ENCODE measurements at regions of chr17 and their contacts with region 1.

Region 1: GRCh38 chr17:13594762-13595598 is 6.7 kb downstream of the HS3ST3A1 start:
- DNase-seq: peak; percentile 51 to 60
- ATAC-seq: peak in 1 of 2 donors; percentile 90
- H3K4me3 ChIP-seq: no peak overlapping the region
- H3K27ac ChIP-seq: no peak overlapping the region
- H3K4me1 ChIP-seq: peaks cover 0 to 8% of the 10 kb centered on the region in 2 donors
- H3K27me3 ChIP-seq: peaks cover 0 to 13% (median 11%) of the 10 kb centered on the region in 3 donors
- CTCF ChIP-seq: peak; percentile 62 to 91 (median 73)
- POLR2A ChIP-seq: no peak

Region 2: GRCh38 chr17:13879961-13880466 is 285.0 kb after region 1 on chr17:
- in situ Hi-C with region 1: no loop called
- intact Hi-C with region 1: no loop called
- DNase-seq: no peak
- ATAC-seq: no peak
- H3K4me3 ChIP-seq: no peak overlapping the region
- H3K27ac ChIP-seq: no peak overlapping the region
- H3K4me1 ChIP-seq: no peaks in the 10 kb centered on the region
- H3K27me3 ChIP-seq: no peaks in the 10 kb centered on the region
- CTCF ChIP-seq: no peak
- POLR2A ChIP-seq: no peak

Region 3: GRCh38 chr17:14069251-14070021 is 474.5 kb after region 1 on chr17 and contains the start of gene COX10:
- in situ Hi-C with region 1: no loop called
- intact Hi-C with region 1: loop called (anchors 5 kb)
- DNase-seq: peak; percentile 80 to 84
- ATAC-seq: peak; percentile 97 to 98
- H3K4me3 ChIP-seq: peak within 1 kb of the TSS; percentile 92 to 99 (median 97)
- H3K27ac ChIP-seq: peak within 1 kb of the TSS; percentile 89 to 98 (median 95)
- H3K4me1 ChIP-seq: peaks cover 21 to 23% of the 10 kb centered on the region in 2 donors
- H3K27me3 ChIP-seq: no peaks in the 10 kb centered on the region
- CTCF ChIP-seq: no peak
- POLR2A ChIP-seq: peak; percentile 84 to 88
- total RNA-seq, gene COX10: 70.6 to 123 (median 87.3) TPM

Region 4: GRCh38 chr17:14211801-14212200 is 616.8 kb after region 1 on chr17:
- in situ Hi-C with region 1: no loop called
- intact Hi-C with region 1: loop called (anchors 10 kb)
- DNase-seq: no peak
- ATAC-seq: no peak
- H3K4me3 ChIP-seq: no peak overlapping the region
- H3K27ac ChIP-seq: no peak overlapping the region
- H3K4me1 ChIP-seq: peaks cover under 1 to 19% of the 10 kb centered on the region in 2 donors
- H3K27me3 ChIP-seq: no peaks in the 10 kb centered on the region
- CTCF ChIP-seq: peak; percentile 12 to 63 (median 58)
- POLR2A ChIP-seq: no peak

Region 5: GRCh38 chr17:14300575-14301278 is 705.7 kb after region 1 on chr17 and contains the start of gene HS3ST3B1:
- in situ Hi-C with region 1: loop called in 3 of 4 experiments (anchors 5 to 25 kb)
- intact Hi-C with region 1: loop called (anchors 1 kb)
- DNase-seq: peak; percentile 96 to 98
- ATAC-seq: peak; percentile 90 to 95
- H3K4me3 ChIP-seq: peak within 1 kb of the TSS; percentile 57 to 74 (median 70)
- H3K27ac ChIP-seq: peak within 1 kb of the TSS; percentile 64 to 80 (median 70)
- H3K4me1 ChIP-seq: peaks cover 35 to 44% of the 10 kb centered on the region in 2 donors
- H3K27me3 ChIP-seq: peaks cover 60 to 89% (median 85%) of the 10 kb centered on the region in 3 donors
- CTCF ChIP-seq: peak in 1 of 5 experiments; percentile 14
- POLR2A ChIP-seq: peak; percentile 77 to 86
- total RNA-seq, gene HS3ST3B1: 0.10 to 4.0 (median 0.82) TPM

Region 6: GRCh38 chr17:14308965-14309879 is 714.2 kb after region 1 on chr17:
- in situ Hi-C with region 1: loop called (anchors 5 to 25 kb)
- intact Hi-C with region 1: no loop called
- DNase-seq: peak; percentile 74 to 80
- ATAC-seq: peak; percentile 96
- H3K4me3 ChIP-seq: peak overlapping the region; percentile 52 to 74 (median 62)
- H3K27ac ChIP-seq: peak overlapping the region in 2 of 4 donors; percentile 41 to 48
- H3K4me1 ChIP-seq: peaks cover 9 to 15% of the 10 kb centered on the region in 2 donors
- H3K27me3 ChIP-seq: peaks cover 20 to 56% (median 48%) of the 10 kb centered on the region in 3 donors
- CTCF ChIP-seq: no peak
- POLR2A ChIP-seq: peak in 1 of 2 donors; percentile 39

Region 7: DNA sequence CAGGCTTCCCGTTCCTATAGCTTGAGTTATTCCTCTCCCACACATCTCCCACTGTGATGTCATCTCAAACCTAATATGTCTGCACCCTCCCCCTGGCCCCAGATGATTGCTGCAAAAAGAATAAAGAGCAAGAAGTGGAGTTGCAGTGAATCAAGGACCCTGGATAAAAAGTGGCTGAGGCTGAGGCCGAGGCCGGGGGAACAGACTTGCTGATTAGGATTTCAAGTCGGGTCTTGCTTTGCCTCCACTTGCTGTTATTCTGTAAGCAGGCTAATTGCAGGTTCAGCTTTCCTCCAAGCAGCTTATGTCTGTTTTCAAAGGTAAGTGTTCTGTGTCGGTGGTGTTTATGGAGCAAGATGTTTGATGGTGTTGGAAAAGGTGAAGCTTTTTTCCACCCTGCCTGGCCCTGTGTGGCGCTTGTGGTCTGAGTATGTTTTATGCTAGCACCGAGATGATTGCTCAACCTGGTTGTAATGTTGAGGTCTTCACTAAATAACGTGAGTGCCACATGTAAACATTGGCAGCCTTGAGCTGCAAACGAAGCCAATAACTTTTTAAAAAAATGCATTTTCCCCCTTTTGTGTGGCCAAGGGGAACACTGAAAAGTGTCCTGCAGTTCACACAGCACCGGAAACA is 721.3 kb after region 1 on chr17:
- in situ Hi-C with region 1: loop called in 2 of 4 experiments (anchors 10 to 25 kb)
- intact Hi-C with region 1: no loop called
- DNase-seq: no peak
- ATAC-seq: no peak
- H3K4me3 ChIP-seq: no peak overlapping the region
- H3K27ac ChIP-seq: no peak overlapping the region
- H3K4me1 ChIP-seq: no peaks in the 10 kb centered on the region
- H3K27me3 ChIP-seq: peaks cover 0 to 14% (median 6%) of the 10 kb centered on the region in 3 donors
- CTCF ChIP-seq: no peak
- POLR2A ChIP-seq: no peak

Region 8: GRCh38 chr17:14926526-14927122 is 1331.6 kb after region 1 on chr17:
- in situ Hi-C with region 1: loop called (anchors 10 to 25 kb)
- intact Hi-C with region 1: no loop called
- DNase-seq: peak in 1 of 2 donors; percentile 6
- ATAC-seq: no peak
- H3K4me3 ChIP-seq: no peak overlapping the region
- H3K27ac ChIP-seq: no peak overlapping the region
- H3K4me1 ChIP-seq: no peaks in the 10 kb centered on the region
- H3K27me3 ChIP-seq: no peaks in the 10 kb centered on the region
- CTCF ChIP-seq: peak; percentile 38 to 66 (median 50)
- POLR2A ChIP-seq: no peak

Measured in gastrocnemius medialis (tissue), 4 donors.